Mammary epithelial cell (primary cell): ENCODE measurements at regions of chr6 and their contacts with region 1.

Region 1: GRCh38 chr6:151317103-151317994 is 74.0 kb downstream of the ZBTB2 start:
- DNase-seq: peak; percentile 69
- H3K4me3 ChIP-seq: no peak overlapping the region
- H3K27ac ChIP-seq: no peak overlapping the region
- H3K4me1 ChIP-seq: no peaks in the 10 kb centered on the region
- H3K27me3 ChIP-seq: no peaks in the 10 kb centered on the region
- CTCF ChIP-seq: no peak

Region 2: DNA sequence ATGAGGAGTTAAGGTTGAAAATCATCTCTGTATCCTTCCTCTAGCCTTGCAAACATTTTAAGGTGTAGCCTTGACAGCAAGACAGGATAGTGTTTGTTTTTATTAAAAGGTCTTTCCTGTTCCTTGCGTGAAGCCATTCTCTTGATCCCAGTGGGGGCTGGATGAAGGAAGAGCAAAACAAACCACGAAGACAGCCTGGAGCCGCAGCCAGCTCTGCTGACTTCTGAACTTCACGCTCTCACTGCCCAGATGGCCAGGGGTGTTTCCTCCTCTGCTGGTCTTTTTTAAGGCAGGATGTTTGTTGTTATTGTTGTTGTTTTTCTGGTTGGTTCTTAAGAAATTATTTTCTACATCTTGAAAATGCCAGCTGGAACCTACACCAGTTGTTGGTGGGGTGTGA is 295.5 kb before region 1 on chr6:
- CTCF ChIA-PET with region 1: no interaction called
- dilution Hi-C with region 1: loop called (anchors 5 kb)
- in situ Hi-C with region 1: no loop called
- intact Hi-C with region 1: no loop called
- DNase-seq: no peak
- H3K4me3 ChIP-seq: no peak overlapping the region
- H3K27ac ChIP-seq: no peak overlapping the region
- H3K4me1 ChIP-seq: peaks cover 6% of the 10 kb centered on the region
- H3K27me3 ChIP-seq: no peaks in the 10 kb centered on the region
- CTCF ChIP-seq: no peak